ENCODE measurements at regions of chr9 and their contacts with region 1.

Region 1: GRCh38 chr9:34701769-34702736 is 7.9 kb downstream of the CCL21 start:
- DNase-seq: peak; percentile 88
- ATAC-seq: peak; percentile 61
- H3K4me3 Mint-ChIP-seq: peak overlapping the region; percentile 63
- H3K27ac Mint-ChIP-seq: no peak overlapping the region
- H3K4me1 Mint-ChIP-seq: peaks cover 7% of the 10 kb centered on the region
- H3K27me3 Mint-ChIP-seq: peaks cover 43% of the 10 kb centered on the region
- CTCF ChIP-seq: peak; percentile 83

Region 2: DNA sequence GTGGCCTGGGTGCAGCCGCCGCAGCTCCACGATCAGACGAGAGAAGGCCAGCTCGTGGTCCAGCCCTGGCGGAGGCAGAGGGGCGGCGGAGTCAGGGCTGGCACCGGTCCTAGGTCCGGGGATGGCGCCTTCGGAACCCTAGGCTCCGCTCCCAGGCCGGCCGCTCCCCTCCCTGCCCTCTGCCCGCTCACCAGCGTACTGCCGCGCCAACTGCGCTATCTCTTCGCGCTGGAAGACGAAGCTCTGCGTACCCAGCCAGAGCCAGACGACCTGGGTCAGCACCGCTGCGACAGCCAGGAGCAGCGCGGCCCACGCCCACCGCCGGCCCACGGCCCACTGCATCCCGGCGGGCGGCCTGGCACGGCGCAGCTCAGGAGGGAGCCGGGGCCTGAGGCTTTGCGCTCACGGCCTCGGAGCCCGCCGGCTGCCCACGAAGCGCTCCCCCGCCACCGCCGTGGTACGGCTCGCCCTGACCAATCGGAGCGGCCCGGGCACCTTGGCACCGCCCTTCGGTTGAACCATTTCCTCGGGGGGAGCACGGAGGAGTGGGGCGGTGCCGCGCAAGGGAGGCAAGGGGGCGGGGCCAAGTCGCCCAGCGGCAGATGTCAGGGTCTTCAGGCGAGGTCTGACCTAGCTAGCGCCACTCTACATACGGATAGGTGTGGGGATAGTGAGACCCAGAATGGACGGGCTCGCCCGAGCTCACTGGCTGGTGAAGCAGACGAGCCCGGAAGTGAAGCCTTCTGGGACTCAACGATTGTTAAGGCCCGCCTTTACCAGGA is 64.5 kb before region 1 on chr9 and contains the start of gene SIGMAR1:
- CTCF ChIA-PET with region 1: interaction called, 31 read pairs
- POLR2A ChIA-PET with region 1: no interaction called
- DNase-seq: peak; percentile 95
- ATAC-seq: peak; percentile 89
- H3K4me3 Mint-ChIP-seq: peak within 1 kb of the TSS; percentile 83
- H3K27ac Mint-ChIP-seq: peak within 1 kb of the TSS; percentile 3
- H3K4me1 Mint-ChIP-seq: peaks cover 22% of the 10 kb centered on the region
- H3K27me3 Mint-ChIP-seq: peaks cover 11% of the 10 kb centered on the region
- CTCF ChIP-seq: no peak
- total RNA-seq, gene SIGMAR1: 108 to 116 TPM (median 109 TPM) in 3 replicates

Region 3: GRCh38 chr9:34665381-34666250 is 36.4 kb before region 1 on chr9:
- CTCF ChIA-PET with region 1: interaction called, 65 read pairs
- POLR2A ChIA-PET with region 1: no interaction called
- DNase-seq: peak; percentile 94
- ATAC-seq: peak; percentile 82
- H3K4me3 Mint-ChIP-seq: peak overlapping the region; percentile 94
- H3K27ac Mint-ChIP-seq: peak overlapping the region; percentile 97
- H3K4me1 Mint-ChIP-seq: peaks cover 9% of the 10 kb centered on the region
- H3K27me3 Mint-ChIP-seq: peaks cover 13% of the 10 kb centered on the region
- CTCF ChIP-seq: no peak

Region 4: GRCh38 chr9:34686231-34686630 is 15.8 kb before region 1 on chr9:
- CTCF ChIA-PET with region 1: interaction called, 60 read pairs
- POLR2A ChIA-PET with region 1: no interaction called
- DNase-seq: no peak
- ATAC-seq: no peak
- H3K4me3 Mint-ChIP-seq: no peak overlapping the region
- H3K27ac Mint-ChIP-seq: no peak overlapping the region
- H3K4me1 Mint-ChIP-seq: peaks cover 16% of the 10 kb centered on the region
- H3K27me3 Mint-ChIP-seq: no peaks in the 10 kb centered on the region
- CTCF ChIP-seq: no peak

Region 5: GRCh38 chr9:34732893-34733292 is 30.8 kb after region 1 on chr9:
- CTCF ChIA-PET with region 1: interaction called, 17 read pairs
- POLR2A ChIA-PET with region 1: no interaction called
- DNase-seq: no peak
- ATAC-seq: no peak
- H3K4me3 Mint-ChIP-seq: no peak overlapping the region
- H3K27ac Mint-ChIP-seq: no peak overlapping the region
- H3K4me1 Mint-ChIP-seq: no peaks in the 10 kb centered on the region
- H3K27me3 Mint-ChIP-seq: peaks cover 13% of the 10 kb centered on the region
- CTCF ChIP-seq: no peak

Region 6: DNA sequence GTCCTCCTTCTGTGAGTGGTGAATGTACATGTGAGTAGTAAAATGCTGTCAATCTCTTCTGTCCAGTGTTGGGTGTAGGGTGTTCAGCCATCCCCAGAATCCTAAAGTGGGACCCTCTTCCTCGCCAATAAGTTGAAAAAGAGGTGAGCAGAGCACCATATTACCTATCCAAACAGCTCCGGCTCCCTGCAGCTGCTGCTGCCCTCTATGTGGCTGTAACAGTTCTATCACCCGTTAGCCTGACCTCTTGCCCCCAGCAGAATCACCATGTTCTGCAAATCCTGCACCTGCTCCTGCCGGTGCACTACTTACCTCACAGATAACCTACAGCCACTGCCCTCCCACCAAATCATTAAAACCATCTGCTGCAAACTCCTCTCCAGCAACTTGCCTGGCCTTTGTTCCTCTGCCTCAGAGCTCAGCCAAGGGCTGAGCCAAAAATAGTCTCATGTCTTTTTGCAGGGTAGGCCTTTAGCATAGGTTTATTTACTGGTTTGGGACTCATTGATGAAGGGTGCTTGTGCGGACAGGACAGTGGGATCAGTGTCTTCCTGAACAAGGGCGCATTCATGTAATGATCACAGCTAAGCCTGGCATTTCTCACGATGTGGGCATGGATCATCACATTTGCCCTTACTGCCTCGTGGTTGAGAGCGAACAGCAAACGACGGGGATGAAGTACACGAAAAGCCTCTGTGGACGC is 57.5 kb after region 1 on chr9:
- CTCF ChIA-PET with region 1: interaction called, 45 read pairs
- POLR2A ChIA-PET with region 1: no interaction called
- DNase-seq: no peak
- ATAC-seq: no peak
- H3K4me3 Mint-ChIP-seq: no peak overlapping the region
- H3K27ac Mint-ChIP-seq: no peak overlapping the region
- H3K4me1 Mint-ChIP-seq: no peaks in the 10 kb centered on the region
- H3K27me3 Mint-ChIP-seq: peaks cover 22% of the 10 kb centered on the region
- CTCF ChIP-seq: no peak

Region 7: GRCh38 chr9:34869390-34869789 is 167.3 kb after region 1 on chr9:
- CTCF ChIA-PET with region 1: interaction called, 25 read pairs
- POLR2A ChIA-PET with region 1: no interaction called
- DNase-seq: no peak
- ATAC-seq: no peak
- H3K4me3 Mint-ChIP-seq: no peak overlapping the region
- H3K27ac Mint-ChIP-seq: no peak overlapping the region
- H3K4me1 Mint-ChIP-seq: no peaks in the 10 kb centered on the region
- H3K27me3 Mint-ChIP-seq: peaks cover 31% of the 10 kb centered on the region
- CTCF ChIP-seq: no peak

Region 8: GRCh38 chr9:36676778-36677485 is 1974.9 kb after region 1 on chr9:
- CTCF ChIA-PET with region 1: no interaction called
- POLR2A ChIA-PET with region 1: no interaction called
- DNase-seq: no peak
- ATAC-seq: no peak
- H3K4me3 Mint-ChIP-seq: no peak overlapping the region
- H3K27ac Mint-ChIP-seq: no peak overlapping the region
- H3K4me1 Mint-ChIP-seq: no peaks in the 10 kb centered on the region
- H3K27me3 Mint-ChIP-seq: no peaks in the 10 kb centered on the region
- CTCF ChIP-seq: no peak